ENCODE measurements at regions of chr14 and their contacts with region 1.

Region 1: DNA sequence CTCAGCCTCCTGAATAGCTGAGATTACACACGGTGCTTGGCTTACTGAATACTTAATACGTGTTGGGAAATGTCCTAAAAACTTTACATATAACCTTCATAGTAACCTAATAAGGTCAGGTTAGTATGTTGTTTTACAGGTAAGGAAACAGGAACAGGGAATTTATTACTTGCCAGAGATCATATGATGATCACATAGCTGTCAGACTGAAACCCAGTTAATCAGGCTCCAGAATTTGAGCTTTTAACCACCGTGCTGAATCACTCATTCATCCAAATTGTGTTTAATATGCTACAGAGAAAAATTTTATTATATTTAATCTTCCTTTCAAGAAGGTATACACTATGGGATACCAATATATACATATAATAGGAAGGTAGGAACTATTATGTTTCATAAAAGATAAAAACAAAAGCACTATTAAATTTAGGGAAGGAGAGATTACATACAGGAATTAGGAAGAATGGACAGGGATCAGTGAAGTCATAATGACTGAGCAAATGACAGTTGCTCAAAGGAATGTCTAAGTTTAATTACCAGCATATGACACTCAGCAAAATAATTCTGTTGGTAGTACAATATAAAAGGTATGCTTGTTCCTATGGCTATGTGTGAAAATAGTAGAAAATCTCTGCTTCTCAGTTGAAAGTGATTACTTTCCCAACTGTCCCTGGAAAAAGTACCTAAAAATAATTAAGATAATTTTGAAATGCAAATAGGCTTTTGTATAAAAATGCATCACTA is 59.3 kb downstream of the HEATR5A start:
- DNase-seq: no peak
- H3K4me3 ChIP-seq: no peak overlapping the region
- H3K27ac ChIP-seq: no peak overlapping the region
- H3K4me1 ChIP-seq: peaks cover 0 to 5% (median 3%) of the 10 kb centered on the region in 4 donors
- H3K27me3 ChIP-seq: no peaks in the 10 kb centered on the region
- CTCF ChIP-seq: no peak
- EP300 ChIP-seq: no peak
- POLR2A ChIP-seq: no peak

Region 2: GRCh38 chr14:30656190-30656632 is 704.9 kb before region 1 on chr14:
- in situ Hi-C with region 1: loop called in 1 of 4 experiments (anchors 25 kb)
- intact Hi-C with region 1: no loop called
- DNase-seq: peak; percentile 25
- H3K4me3 ChIP-seq: no peak overlapping the region
- H3K27ac ChIP-seq: peak overlapping the region in 1 of 4 donors; percentile 36
- H3K4me1 ChIP-seq: peaks cover 0 to 13% (median 0%) of the 10 kb centered on the region in 4 donors
- H3K27me3 ChIP-seq: no peaks in the 10 kb centered on the region
- CTCF ChIP-seq: peak; percentile 54 to 76 (median 67)
- EP300 ChIP-seq: no peak
- POLR2A ChIP-seq: no peak

Region 3: DNA sequence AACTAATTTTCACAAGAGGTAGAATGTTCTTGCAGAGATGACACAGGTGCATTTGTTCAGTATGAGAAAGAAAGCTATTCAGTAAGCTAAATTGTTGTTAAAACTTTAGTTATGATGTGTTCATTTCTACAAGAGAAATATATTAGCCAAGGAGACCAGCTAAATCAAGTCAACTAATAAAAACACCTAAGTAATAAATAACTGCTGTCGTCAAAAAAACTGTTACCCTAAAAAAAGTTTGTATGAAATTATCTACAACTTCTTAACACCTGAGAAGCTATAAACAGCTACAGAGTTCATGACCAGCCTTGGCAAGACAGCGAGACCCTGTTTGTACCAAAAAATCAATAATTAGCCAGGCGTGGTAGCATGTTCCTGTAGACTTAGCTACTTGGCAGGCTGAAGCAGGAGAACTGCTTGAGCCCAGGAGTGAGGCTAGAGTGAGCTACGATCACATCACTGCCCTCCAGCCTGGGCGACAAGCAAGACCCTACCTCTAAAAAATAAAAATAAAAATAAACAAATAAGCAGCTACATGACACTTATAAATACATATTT is 403.2 kb before region 1 on chr14:
- in situ Hi-C with region 1: loop called in 1 of 4 experiments (anchors 25 kb)
- intact Hi-C with region 1: no loop called
- DNase-seq: no peak
- H3K4me3 ChIP-seq: no peak overlapping the region
- H3K27ac ChIP-seq: no peak overlapping the region
- H3K4me1 ChIP-seq: peaks cover 0 to 16% (median 3%) of the 10 kb centered on the region in 4 donors
- H3K27me3 ChIP-seq: no peaks in the 10 kb centered on the region
- CTCF ChIP-seq: no peak
- EP300 ChIP-seq: no peak
- POLR2A ChIP-seq: no peak

Region 4: DNA sequence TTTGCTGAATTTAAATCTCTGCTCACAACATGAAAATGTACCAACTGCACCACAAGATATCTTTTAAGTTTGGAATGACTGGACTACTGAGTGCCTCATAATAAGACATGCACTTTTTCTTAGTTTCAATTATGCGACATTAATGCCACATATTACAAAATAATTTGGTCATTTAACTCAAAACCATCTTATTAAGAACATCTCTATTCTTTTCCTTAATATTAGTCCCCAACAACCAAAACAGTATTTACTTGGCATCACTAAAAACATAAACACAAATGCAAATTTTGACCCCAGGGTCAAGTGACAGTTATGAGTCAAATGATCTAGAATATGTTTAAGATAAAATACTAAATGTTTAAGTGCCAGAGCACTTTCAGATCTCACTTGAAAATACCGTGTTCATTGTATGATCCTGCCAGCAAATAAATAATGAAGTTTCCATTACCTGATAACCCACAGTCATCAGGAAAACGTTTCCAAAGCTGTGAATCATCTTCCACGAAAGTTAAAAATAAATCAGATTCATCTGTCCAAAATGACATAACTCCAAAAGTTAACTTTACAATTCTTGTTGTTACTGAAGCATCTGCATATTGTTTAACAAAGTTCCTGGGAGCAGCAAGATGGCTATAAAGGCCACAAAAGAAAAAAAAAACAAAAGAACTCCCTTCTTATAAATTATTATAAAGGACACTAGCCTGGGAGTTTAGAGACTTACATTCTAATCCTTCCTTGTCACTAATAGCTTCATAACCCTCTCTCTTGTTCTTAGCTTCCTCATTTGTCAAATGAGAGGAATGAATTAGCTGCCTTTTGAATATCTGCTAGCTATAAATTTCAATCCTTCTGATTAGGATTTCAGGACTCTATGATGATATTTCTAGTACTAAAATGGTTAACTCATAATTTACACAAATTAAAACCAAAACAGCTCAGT is 366.1 kb before region 1 on chr14:
- in situ Hi-C with region 1: loop called in 1 of 4 experiments (anchors 25 kb)
- intact Hi-C with region 1: no loop called
- DNase-seq: no peak
- H3K4me3 ChIP-seq: no peak overlapping the region
- H3K27ac ChIP-seq: no peak overlapping the region
- H3K4me1 ChIP-seq: peaks cover 11 to 44% (median 21%) of the 10 kb centered on the region in 4 donors
- H3K27me3 ChIP-seq: no peaks in the 10 kb centered on the region
- CTCF ChIP-seq: no peak
- EP300 ChIP-seq: no peak
- POLR2A ChIP-seq: no peak

Region 5: DNA sequence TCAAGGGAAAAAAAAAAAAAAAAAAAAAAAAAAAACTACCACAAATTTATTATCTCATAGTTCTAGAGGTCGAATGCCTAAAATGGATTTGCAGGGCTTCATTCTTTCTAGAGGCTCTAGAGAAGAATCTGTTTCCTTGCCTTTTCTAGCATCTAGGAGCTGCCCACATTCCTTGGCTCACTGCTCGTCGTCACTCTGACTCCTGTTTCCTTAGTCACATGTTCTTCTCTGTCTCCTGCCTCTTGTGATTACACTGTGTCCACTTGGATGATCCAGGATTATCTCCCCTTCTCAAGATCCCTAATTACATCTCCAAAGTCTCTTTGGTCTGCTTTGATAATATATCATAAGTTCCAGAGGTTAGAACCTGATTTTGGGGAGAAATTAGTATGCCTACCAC is 242.2 kb before region 1 on chr14:
- in situ Hi-C with region 1: loop called in 1 of 4 experiments (anchors 10 kb)
- intact Hi-C with region 1: no loop called
- DNase-seq: no peak
- H3K4me3 ChIP-seq: no peak overlapping the region
- H3K27ac ChIP-seq: no peak overlapping the region
- H3K4me1 ChIP-seq: no peaks in the 10 kb centered on the region
- H3K27me3 ChIP-seq: no peaks in the 10 kb centered on the region
- CTCF ChIP-seq: no peak
- EP300 ChIP-seq: no peak
- POLR2A ChIP-seq: no peak

Region 6: GRCh38 chr14:31159682-31160296 is 201.3 kb before region 1 on chr14:
- in situ Hi-C with region 1: loop called in 3 of 4 experiments (anchors 25 kb)
- intact Hi-C with region 1: no loop called
- DNase-seq: peak; percentile 22
- H3K4me3 ChIP-seq: no peak overlapping the region
- H3K27ac ChIP-seq: peak overlapping the region; percentile 5 to 61 (median 52)
- H3K4me1 ChIP-seq: peaks cover 3 to 18% (median 7%) of the 10 kb centered on the region in 4 donors
- H3K27me3 ChIP-seq: no peaks in the 10 kb centered on the region
- CTCF ChIP-seq: no peak
- EP300 ChIP-seq: no peak
- POLR2A ChIP-seq: no peak

Measured in transverse colon (tissue), 4 donors.